ENCODE measurements at regions of chr3 and their contacts with region 1.

Region 1: DNA sequence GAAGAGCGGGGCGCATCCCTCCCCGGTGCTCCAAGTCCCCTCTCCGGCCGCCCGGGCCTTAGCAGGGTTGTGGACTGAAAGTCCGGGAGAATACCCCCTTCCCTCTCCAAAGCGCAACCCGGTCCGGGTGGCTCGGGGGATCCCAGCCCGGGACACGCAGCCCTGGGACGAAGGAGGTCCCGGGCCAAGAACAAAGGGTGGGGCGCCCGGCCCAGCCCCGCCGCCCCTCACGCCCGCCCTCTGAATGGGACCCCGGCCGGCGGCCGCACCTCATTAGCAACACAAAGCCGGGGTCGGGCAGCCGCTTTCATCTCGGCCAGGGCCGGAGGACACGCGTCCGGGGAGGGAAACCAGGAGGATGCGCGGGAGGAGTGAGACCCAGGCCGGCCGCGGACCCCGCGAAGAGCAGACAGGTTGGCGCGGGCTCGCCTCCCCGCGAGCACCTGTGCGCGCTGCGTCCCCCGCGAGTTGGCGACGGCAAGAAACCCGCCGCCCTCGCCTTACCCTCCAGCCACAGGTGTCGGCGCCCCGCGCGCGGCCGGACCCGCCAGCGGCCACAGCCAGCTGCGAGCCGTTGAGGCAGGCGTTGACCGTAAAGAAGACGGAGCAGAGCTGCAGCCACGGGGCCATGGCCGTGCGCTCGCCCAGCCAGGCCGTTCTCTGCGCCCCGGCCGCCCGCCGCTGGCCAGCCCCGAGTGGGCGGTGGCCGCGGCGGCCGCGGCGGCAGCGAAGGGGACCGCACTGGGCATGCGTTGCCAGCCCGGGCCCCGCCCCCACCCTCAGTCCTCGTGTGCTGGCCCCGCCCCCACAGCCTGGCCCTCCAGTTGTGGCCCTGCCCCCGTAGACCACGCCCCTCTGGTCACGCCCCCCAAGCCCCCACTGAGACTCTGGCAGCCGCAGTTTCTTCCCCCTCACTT is at the start of gene IL17RD:
- DNase-seq: peak; percentile 64
- ATAC-seq: peak; percentile 93
- H3K4me3 ChIP-seq: peak within 1 kb of the TSS; percentile 90
- H3K27ac ChIP-seq: no peak within 1 kb of the TSS; the same call in 1 of the 2 replicates
- H3K4me1 ChIP-seq: peaks cover 6% of the 10 kb centered on the region; the same call in 1 of the 2 replicates
- H3K27me3 ChIP-seq: peaks cover 40% of the 10 kb centered on the region
- CTCF ChIP-seq: no peak
- POLR2A ChIP-seq: no peak
- RAD21 ChIP-seq: no peak
- total RNA-seq, gene IL17RD: 0.72 and 0.83 TPM in 2 replicates

Region 2: DNA sequence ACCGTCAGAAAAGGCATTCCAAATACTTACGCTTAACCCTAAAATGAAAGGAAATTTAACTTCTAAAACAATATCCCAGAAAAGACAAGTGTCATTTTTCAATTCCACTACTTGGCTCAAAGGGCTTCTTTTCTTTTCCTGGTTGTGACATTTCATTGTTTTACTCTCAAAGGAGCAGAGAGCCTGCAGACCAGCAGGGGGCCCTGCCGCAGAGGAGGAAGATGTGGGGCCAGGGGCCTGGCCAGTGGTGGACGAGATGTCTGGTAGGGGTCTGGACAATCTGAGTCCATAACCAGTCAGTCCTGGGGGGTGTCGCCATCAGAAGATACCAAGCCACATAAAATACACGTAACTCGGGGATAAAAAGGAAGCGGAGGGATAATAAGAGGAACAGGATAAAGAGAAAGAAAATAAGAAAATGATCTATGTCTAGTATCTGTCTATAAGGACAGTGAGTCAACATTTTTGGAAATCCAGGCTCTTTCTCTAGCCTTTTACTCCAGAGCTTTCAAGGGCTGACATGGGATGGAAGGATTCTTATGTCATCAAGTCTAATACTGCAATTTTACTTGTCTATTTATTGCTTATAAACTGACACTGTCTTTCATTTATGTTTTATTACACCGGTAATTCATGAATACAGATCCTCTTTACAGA is 308.9 kb before region 1 on chr3:
- CTCF ChIA-PET with region 1: no interaction called
- POLR2A ChIA-PET with region 1: no interaction called
- dilution Hi-C with region 1: no loop called
- in situ Hi-C with region 1: no loop called
- intact Hi-C with region 1: no loop called
- DNase-seq: no peak
- ATAC-seq: no peak; the same call in 1 of the 2 replicates
- H3K4me3 ChIP-seq: no peak overlapping the region
- H3K27ac ChIP-seq: no peak overlapping the region
- H3K4me1 ChIP-seq: no peaks in the 10 kb centered on the region
- H3K27me3 ChIP-seq: 0 out of 2 replicates have a peak, but pooled peaks cover 2% of the 10 kb centered on the region
- CTCF ChIP-seq: peak; percentile 39
- POLR2A ChIP-seq: no peak
- RAD21 ChIP-seq: peak; percentile 32; the same call in 1 of the 2 replicates

Region 3: DNA sequence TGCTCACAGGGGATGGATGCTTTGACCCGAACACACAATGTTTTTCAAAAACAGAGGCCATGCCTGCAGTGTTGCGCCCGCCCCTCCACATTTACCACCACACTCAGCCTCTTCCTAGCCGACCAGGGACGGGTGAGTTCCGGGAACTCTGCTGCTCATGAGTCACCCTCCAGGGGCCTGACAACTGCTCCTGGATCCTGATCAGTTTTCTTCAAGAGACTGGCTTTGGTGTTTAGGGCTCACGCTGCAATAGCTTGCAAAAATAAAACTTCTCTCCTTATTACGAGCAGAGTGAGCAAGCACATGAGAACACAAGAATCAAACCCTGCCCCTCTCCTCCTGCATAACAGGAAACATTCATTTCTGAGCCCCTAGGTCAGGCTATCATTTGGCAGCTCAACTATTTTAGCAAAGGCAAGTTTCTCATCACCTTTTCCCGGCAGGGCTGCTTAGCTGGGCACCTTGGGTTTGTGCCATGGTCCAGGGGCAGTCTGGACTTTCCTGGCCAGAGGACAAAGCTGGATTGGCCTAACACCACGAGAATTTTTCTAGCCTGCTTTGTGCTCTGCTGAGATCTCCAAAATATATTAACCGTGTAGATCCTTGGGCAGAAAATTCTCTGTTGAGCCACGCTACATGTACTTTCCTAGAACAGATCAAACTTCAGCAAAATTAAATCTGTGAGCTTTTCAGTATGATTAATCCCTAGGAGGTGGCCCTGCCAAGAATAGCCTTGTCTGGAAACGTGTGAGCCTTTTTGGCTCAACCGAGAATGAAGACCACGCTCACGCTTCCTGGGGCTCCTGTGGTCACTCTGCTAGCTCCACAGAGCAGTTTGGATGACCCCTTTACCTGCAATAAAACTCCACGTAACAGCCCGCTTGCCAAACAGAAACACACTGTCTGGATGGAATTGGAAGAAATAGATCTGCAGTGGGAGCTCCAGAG is 157.1 kb before region 1 on chr3:
- CTCF ChIA-PET with region 1: no interaction called
- POLR2A ChIA-PET with region 1: no interaction called
- dilution Hi-C with region 1: no loop called
- in situ Hi-C with region 1: no loop called
- intact Hi-C with region 1: loop called (anchors 5 kb)
- DNase-seq: peak; percentile 85
- ATAC-seq: peak; percentile 95
- H3K4me3 ChIP-seq: no peak overlapping the region
- H3K27ac ChIP-seq: peak overlapping the region; percentile 87; the same call in 1 of the 2 replicates
- H3K4me1 ChIP-seq: peaks cover 24% of the 10 kb centered on the region
- H3K27me3 ChIP-seq: 0 out of 2 replicates have a peak, but pooled peaks cover 2% of the 10 kb centered on the region
- CTCF ChIP-seq: no peak
- POLR2A ChIP-seq: no peak
- RAD21 ChIP-seq: no peak